OCI-LY7 (cell line): ENCODE measurements at regions of chr2 and their contacts with region 1.

Region 1: DNA sequence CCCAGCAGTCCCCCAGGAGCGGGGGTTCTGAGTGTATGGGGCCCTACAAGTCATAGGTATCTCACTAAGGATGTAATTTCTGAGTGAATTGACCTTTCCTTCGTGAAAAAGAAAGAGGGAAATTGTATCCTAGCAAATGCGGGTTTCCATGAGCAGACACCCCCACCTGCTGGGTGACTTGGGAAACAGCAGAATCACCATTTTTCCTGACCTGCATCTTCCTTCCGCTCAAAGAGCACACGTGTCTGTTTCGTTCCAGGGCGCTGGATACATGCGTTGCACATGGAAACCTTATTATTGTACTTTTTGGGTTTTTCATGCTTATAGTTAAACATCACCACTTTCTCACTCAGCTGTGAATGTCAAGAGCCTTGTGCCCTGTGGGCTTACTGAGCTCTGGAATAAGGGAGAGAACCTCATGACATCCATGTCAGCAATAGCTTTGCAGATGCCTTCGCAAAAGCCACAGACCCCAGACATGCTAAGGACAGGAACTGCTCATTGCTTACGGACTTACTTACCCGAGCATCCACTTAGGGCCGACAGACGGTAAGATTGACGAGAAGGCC is 132.8 kb downstream of the TPO start:
- DNase-seq: peak; percentile 20
- H3K4me3 ChIP-seq: no peak overlapping the region
- H3K27ac ChIP-seq: no peak overlapping the region
- H3K4me1 ChIP-seq: no peaks in the 10 kb centered on the region
- CTCF ChIP-seq: peak; percentile 81

Region 2: DNA sequence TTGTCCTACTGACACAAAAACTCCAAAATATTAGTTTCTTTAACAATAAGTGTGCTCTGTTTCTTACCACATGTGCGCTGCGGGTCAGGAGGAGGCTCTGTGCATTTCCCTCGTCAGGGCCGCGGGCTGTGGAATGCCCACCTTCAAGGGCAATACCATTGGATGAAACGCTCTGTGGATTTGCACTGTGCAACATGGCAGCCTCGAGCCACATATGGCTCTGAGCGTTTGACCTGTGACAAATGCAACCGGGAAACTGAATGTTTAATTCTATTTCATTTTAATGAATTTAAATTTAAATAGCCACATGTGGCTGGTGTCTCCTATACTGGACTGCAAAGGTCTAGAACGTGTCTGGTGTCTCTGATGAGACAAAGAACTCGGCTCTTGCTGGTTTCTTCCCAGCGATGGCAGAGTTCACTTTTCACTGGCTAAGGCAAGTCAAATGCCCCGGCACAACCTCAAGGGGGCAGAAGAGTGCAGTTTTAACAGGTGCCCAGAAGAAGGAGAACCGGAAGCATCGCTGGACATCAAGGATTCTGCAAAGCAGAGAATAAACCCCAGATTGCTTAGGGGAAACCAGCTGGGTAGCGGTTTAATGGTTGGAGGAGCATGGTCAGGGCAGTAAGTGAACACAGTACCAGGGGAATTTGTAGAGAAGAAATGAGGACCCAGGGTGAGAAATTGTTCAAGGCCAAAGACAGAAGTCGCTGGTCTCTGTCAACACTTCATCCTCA is 831.9 kb before region 1 on chr2:
- CTCF ChIA-PET with region 1: no interaction called
- POLR2A ChIA-PET with region 1: no interaction called
- intact Hi-C with region 1: loop called (anchors 10 kb)
- DNase-seq: peak; percentile 78
- H3K4me3 ChIP-seq: no peak overlapping the region
- H3K27ac ChIP-seq: no peak overlapping the region
- H3K4me1 ChIP-seq: peaks cover 5% of the 10 kb centered on the region
- CTCF ChIP-seq: peak; percentile 82

Region 3: GRCh38 chr2:854460-854859 is 691.6 kb before region 1 on chr2:
- CTCF ChIA-PET with region 1: no interaction called
- POLR2A ChIA-PET with region 1: no interaction called
- intact Hi-C with region 1: loop called (anchors 1 kb)
- DNase-seq: peak; percentile 37
- H3K4me3 ChIP-seq: no peak overlapping the region
- H3K27ac ChIP-seq: no peak overlapping the region
- H3K4me1 ChIP-seq: no peaks in the 10 kb centered on the region
- CTCF ChIP-seq: peak; percentile 87

Region 4: GRCh38 chr2:1501038-1501851 is 44.9 kb before region 1 on chr2:
- CTCF ChIA-PET with region 1: no interaction called
- POLR2A ChIA-PET with region 1: no interaction called
- intact Hi-C with region 1: no loop called
- DNase-seq: no peak
- H3K4me3 ChIP-seq: no peak overlapping the region
- H3K27ac ChIP-seq: no peak overlapping the region
- H3K4me1 ChIP-seq: no peaks in the 10 kb centered on the region
- CTCF ChIP-seq: no peak

Region 5: DNA sequence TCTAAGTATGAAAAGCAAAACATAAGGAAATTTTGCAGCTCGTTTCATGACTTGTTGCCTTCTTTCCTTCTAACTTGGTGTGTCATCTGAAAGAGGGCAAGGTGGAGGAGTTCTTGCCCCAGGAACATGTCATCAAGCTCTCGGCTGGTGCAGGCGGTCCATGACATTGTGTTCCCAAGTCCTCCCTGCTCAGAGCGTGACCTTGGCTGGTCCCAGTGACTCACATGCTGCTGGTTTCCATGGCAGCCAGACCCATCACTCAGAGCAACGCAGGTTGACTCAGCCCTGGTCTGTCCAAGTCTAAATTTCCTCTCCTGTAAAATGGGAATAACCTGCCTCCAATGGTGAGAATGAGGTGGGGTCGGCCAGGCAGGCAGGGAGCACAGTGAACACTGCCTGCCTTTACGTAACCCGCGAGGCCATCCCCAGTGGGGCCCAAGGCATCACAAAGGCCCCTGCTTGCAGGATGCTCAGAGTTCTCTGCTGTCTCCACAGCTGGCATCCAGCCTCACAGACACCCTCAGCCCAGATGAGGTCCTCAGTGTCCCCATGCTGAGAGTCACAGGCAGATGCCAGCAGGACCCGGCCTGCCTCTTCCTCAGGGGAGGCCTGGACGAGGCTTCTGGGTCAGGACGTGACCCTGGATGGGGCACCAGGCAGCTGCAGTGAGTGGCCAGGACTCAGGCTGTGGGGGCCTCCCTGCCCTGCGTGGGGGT is 10.8 kb after region 1 on chr2:
- CTCF ChIA-PET with region 1: no interaction called
- POLR2A ChIA-PET with region 1: no interaction called
- intact Hi-C with region 1: no loop called
- DNase-seq: no peak
- H3K4me3 ChIP-seq: no peak overlapping the region
- H3K27ac ChIP-seq: no peak overlapping the region
- H3K4me1 ChIP-seq: no peaks in the 10 kb centered on the region
- CTCF ChIP-seq: no peak

Region 6: GRCh38 chr2:1658394-1659151 is 112.5 kb after region 1 on chr2:
- CTCF ChIA-PET with region 1: no interaction called
- POLR2A ChIA-PET with region 1: no interaction called
- intact Hi-C with region 1: no loop called
- DNase-seq: no peak
- H3K4me3 ChIP-seq: no peak overlapping the region
- H3K27ac ChIP-seq: no peak overlapping the region
- H3K4me1 ChIP-seq: no peaks in the 10 kb centered on the region
- CTCF ChIP-seq: no peak